Activated CD4-positive, alpha-beta memory T cell treated with anti-CD3 and anti-CD28 coated beads, Interleukin-2, amount 10 ng/mL, durations not matched to agents 7 days and 5 days (primary cell): ENCODE measurements at regions of chr3 and their contacts with region 1.

Region 1: GRCh38 chr3:14402304-14402811 is at the start of gene SLC6A6:
- DNase-seq: peak; percentile 95
- H3K4me3 Mint-ChIP-seq: peak within 1 kb of the TSS; percentile 97
- H3K27ac Mint-ChIP-seq: peak within 1 kb of the TSS; percentile 96
- H3K4me1 Mint-ChIP-seq: peaks cover 47% of the 10 kb centered on the region
- H3K27me3 Mint-ChIP-seq: peaks cover 2% of the 10 kb centered on the region
- total RNA-seq, gene SLC6A6: 59.0 to 61.5 TPM

Region 2: GRCh38 chr3:14377348-14378169 is 24.8 kb before region 1 on chr3:
- CTCF ChIA-PET with region 1: interaction called, 17 read pairs
- POLR2A ChIA-PET with region 1: interaction called, 11 read pairs
- DNase-seq: peak; percentile 79
- H3K4me3 Mint-ChIP-seq: no peak overlapping the region
- H3K27ac Mint-ChIP-seq: peak overlapping the region; percentile 88
- H3K4me1 Mint-ChIP-seq: peaks cover 38% of the 10 kb centered on the region
- H3K27me3 Mint-ChIP-seq: peaks cover 6% of the 10 kb centered on the region

Region 3: GRCh38 chr3:14426063-14426620 is 23.8 kb after region 1 on chr3:
- CTCF ChIA-PET with region 1: interaction called, 46 read pairs
- POLR2A ChIA-PET with region 1: interaction called, 105 read pairs
- DNase-seq: peak; percentile 76
- H3K4me3 Mint-ChIP-seq: peak overlapping the region; percentile 49
- H3K27ac Mint-ChIP-seq: peak overlapping the region; percentile 76
- H3K4me1 Mint-ChIP-seq: peaks cover 86% of the 10 kb centered on the region
- H3K27me3 Mint-ChIP-seq: no peaks in the 10 kb centered on the region

Region 4: DNA sequence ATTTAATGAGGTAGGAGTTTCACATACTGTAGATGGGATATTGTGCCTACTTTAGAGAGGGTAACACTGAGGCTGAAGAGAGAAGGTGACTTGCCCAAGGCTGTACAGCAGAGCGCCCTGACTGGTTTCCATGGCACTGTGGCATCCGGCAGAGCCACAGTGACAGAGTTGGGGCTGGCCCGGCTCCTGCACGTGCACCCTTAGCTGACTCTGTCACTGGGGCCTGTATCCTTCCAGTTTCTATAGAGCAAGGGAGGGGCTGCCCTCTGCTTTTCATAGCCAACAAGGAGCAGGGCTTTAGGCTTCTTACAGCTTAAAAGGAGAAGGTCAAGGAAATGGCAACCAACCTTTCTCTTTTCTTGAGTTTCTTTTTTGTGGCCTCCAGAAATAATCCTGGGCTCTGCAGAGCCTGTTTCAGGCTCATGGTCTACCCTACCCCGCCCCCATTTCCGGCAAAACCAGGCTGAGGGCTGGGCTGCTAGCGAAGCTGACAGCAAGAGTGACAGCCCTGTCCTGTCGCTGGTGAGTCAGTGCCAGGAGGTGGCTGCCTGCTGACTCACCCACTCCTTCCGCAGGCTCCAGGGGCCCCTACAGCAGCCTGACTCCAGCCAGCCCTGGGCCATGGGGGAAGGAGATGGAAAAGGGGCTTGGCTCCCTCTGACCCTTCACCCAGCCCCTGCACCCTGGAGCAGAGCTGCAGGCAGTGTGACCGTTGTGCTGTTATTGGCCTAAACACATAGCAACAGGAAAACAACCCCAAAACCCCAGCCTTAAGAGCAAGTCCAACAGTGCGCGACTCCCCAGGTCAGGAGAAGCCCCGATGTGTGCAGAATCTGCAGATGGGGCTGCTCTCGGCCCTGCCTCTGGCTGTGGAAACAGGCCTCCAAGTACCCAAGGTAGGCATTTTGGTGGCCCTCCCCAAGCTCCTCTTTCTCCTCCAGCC is 29.8 kb after region 1 on chr3:
- CTCF ChIA-PET with region 1: interaction called, 46 read pairs
- POLR2A ChIA-PET with region 1: interaction called, 105 read pairs
- DNase-seq: peak; percentile 96
- H3K4me3 Mint-ChIP-seq: peak overlapping the region; percentile 75
- H3K27ac Mint-ChIP-seq: peak overlapping the region; percentile 100
- H3K4me1 Mint-ChIP-seq: peaks cover 89% of the 10 kb centered on the region
- H3K27me3 Mint-ChIP-seq: no peaks in the 10 kb centered on the region

Region 5: GRCh38 chr3:14458434-14459280 is 56.3 kb after region 1 on chr3:
- CTCF ChIA-PET with region 1: interaction called, 13 read pairs
- POLR2A ChIA-PET with region 1: interaction called, 4 read pairs
- DNase-seq: no peak
- H3K4me3 Mint-ChIP-seq: no peak overlapping the region
- H3K27ac Mint-ChIP-seq: peak overlapping the region; percentile 59
- H3K4me1 Mint-ChIP-seq: peaks cover 13% of the 10 kb centered on the region
- H3K27me3 Mint-ChIP-seq: no peaks in the 10 kb centered on the region

Region 6: DNA sequence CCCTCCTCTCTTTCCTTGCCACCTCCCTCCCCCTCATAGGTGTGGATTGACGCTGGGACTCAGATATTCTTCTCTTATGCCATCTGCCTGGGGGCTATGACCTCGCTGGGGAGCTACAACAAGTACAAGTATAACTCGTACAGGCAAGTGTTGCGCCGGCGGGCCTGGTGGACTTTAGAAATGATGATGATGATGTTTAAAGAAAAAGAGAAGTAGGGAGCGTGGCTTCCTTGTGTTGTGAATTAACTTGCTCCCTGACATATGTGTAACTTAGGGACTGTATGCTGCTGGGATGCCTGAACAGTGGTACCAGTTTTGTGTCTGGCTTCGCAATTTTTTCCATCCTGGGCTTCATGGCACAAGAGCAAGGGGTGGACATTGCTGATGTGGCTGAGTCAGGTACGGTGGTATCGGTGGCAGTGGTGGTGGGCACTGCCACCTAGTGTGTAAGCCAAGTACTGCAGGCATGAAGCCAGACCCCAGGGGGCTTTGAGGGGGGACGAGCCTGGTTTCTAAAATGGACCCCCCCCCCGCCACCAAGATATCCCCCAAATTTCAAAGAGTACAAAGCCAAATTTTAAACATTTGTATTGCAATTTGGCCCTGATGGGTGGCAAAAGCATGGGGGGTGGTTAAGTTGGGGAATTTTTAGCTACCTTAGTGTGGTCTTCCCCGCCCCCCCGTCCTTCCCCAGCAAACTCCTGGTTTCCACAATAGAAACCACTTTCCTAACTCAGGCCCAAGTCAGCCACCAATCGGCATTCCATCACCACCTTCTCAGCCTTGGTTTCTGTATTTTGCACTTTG is 65.7 kb after region 1 on chr3:
- CTCF ChIA-PET with region 1: interaction called, 26 read pairs
- POLR2A ChIA-PET with region 1: interaction called, 13 read pairs
- DNase-seq: peak; percentile 46
- H3K4me3 Mint-ChIP-seq: no peak overlapping the region
- H3K27ac Mint-ChIP-seq: no peak overlapping the region
- H3K4me1 Mint-ChIP-seq: peaks cover 5% of the 10 kb centered on the region
- H3K27me3 Mint-ChIP-seq: no peaks in the 10 kb centered on the region